Activated naive CD4-positive, alpha-beta T cell treated with anti-CD3 and anti-CD28 coated beads for 36 hours (primary cell): ENCODE measurements at regions of chr16 and their contacts with region 1.

Region 1: GRCh38 chr16:11255737-11256660 is at the start of gene SOCS1:
- DNase-seq: peak; percentile 85
- H3K4me3 Mint-ChIP-seq: peak within 1 kb of the TSS; percentile 95
- H3K27ac Mint-ChIP-seq: peak within 1 kb of the TSS; percentile 99
- H3K4me1 Mint-ChIP-seq: peaks cover 36% of the 10 kb centered on the region
- H3K27me3 Mint-ChIP-seq: no peaks in the 10 kb centered on the region
- total RNA-seq, gene SOCS1: 45.1 to 45.6 TPM

Region 2: GRCh38 chr16:10957771-10958486 is 298.1 kb before region 1 on chr16:
- CTCF ChIA-PET with region 1: interaction called, 57 read pairs
- intact Hi-C with region 1: loop called (anchors 1 kb)
- DNase-seq: peak; percentile 57
- H3K4me3 Mint-ChIP-seq: no peak overlapping the region
- H3K27ac Mint-ChIP-seq: peak overlapping the region; percentile 82
- H3K4me1 Mint-ChIP-seq: peaks cover 37% of the 10 kb centered on the region
- H3K27me3 Mint-ChIP-seq: no peaks in the 10 kb centered on the region

Region 3: DNA sequence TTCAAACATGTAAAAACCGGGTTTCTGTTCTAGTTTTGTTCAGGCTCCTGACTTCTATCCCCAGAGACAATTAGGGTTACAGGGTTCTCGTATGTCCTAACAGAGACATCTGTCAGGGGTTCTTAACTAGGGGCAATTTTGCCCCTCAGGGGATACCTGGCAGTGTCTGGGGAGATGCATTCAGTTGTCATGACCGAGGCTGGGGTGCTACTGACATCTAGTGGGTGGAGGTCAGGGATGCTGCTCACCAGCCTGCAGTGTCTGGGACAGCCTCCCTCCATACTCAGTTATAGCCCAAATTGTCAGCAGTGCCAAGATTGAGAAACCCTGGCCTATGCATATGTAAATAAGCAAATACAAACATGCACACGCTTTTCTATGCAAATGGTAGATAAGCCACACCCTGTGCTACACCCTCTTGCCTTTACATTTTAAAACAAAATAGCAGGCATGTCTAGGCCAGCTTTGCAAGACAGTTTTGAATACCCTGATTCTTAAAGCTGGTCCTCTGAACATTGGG is 274.2 kb before region 1 on chr16:
- CTCF ChIA-PET with region 1: interaction called, 25 read pairs
- intact Hi-C with region 1: no loop called
- DNase-seq: peak; percentile 76
- H3K4me3 Mint-ChIP-seq: no peak overlapping the region
- H3K27ac Mint-ChIP-seq: no peak overlapping the region
- H3K4me1 Mint-ChIP-seq: peaks cover 36% of the 10 kb centered on the region
- H3K27me3 Mint-ChIP-seq: no peaks in the 10 kb centered on the region

Region 4: DNA sequence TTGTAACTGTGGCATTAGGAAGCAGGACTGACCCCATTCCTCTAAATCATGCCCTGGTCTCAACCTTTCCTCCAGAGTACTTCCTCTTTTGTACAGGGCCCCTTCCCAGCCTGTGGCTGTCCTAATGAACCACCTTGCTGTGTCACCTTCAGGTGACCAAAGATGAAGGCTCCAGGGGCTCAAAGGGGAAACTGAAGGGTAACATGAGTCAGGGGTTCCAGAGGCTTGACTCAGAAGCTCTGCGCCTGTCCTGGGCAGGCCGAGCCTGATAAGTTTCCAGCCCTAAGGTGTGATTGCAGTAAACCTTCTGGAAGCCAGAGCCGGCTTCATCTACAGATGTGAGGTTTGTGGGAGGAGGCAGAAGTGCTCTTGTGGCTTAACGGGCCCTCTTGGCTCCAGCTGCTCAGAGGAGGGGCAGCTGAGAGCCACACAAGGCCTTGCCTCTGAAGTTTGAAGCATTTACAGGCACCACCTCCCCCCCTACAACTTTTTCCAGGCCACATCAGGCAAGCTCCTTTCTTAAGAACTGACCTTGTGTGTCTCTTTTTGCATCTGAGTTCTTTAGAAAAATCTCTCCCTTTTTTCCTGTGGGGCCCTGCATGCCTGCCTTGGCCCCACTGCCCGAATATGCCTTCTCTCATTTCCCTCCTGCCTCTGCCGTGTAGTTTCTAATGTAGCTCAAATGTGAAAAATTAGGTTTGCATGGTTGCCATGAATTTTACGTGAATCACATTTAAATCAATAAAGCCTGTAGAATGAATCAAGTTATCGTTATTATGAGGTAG is 161.7 kb before region 1 on chr16:
- CTCF ChIA-PET with region 1: interaction called, 5 read pairs
- intact Hi-C with region 1: loop called (anchors 1 kb)
- DNase-seq: peak; percentile 88
- H3K4me3 Mint-ChIP-seq: peak overlapping the region; percentile 11
- H3K27ac Mint-ChIP-seq: peak overlapping the region; percentile 95
- H3K4me1 Mint-ChIP-seq: peaks cover 68% of the 10 kb centered on the region
- H3K27me3 Mint-ChIP-seq: no peaks in the 10 kb centered on the region

Region 5: DNA sequence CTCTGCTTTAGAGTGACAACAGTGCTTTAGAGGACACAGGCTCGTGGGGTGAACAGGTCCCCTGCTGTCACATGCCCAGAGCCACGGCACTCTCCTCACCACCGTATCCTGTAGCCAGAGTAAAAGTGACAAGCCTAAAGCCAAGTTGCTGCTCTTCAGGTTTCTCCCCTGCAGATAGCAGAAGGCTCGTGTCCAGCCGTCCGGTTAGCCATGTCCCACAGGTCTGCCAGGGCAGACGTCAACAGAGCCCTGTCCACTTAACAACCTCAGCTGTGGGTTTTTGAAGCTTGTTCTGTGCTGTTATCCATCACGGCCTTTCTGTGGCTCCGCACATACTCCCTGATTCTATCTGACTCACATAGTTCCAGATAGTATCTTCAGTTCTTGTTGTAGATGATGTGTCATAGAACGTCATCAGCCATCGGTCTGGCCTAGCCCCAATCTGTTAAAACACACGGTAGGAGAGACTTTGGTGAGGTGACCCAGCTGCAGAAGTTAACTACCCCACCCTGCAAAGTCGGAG is 100.7 kb before region 1 on chr16:
- CTCF ChIA-PET with region 1: no interaction called
- intact Hi-C with region 1: no loop called
- DNase-seq: no peak
- H3K4me3 Mint-ChIP-seq: no peak overlapping the region
- H3K27ac Mint-ChIP-seq: no peak overlapping the region
- H3K4me1 Mint-ChIP-seq: peaks cover 5% of the 10 kb centered on the region
- H3K27me3 Mint-ChIP-seq: no peaks in the 10 kb centered on the region

Region 6: DNA sequence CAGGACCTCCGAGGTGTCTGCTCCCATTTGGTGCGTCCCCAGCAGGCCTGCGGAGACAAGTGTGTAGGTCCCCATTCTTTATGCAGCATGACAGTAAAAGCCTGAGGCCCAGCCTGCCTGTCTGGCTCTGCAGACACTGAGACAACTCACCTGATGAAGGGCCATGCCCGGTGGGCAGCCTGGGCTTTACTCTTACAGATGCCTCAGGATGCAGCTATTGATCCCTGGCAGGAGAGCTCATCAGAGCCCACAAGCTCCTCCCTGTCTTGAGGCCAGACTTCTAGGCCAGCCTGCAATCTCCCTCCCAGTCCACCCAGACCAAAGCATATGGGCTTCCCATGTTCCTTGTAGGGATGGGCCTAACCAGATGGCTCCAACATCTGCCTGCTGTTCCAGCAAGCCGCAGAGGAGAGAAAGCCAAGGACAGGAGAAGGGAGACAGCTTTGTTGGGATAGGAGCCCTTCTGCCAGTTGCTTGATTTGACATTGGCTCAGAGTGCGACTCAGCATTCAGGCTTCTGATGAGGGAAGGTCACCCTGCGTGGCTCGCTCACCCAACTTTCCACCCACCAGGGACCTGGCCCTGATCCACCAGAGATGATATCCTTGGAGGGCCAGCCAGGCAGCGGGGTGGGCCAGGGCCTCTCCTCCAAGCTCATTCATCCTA is 87.5 kb before region 1 on chr16:
- CTCF ChIA-PET with region 1: no interaction called
- intact Hi-C with region 1: no loop called
- DNase-seq: no peak
- H3K4me3 Mint-ChIP-seq: no peak overlapping the region
- H3K27ac Mint-ChIP-seq: no peak overlapping the region
- H3K4me1 Mint-ChIP-seq: no peaks in the 10 kb centered on the region
- H3K27me3 Mint-ChIP-seq: no peaks in the 10 kb centered on the region

Region 7: DNA sequence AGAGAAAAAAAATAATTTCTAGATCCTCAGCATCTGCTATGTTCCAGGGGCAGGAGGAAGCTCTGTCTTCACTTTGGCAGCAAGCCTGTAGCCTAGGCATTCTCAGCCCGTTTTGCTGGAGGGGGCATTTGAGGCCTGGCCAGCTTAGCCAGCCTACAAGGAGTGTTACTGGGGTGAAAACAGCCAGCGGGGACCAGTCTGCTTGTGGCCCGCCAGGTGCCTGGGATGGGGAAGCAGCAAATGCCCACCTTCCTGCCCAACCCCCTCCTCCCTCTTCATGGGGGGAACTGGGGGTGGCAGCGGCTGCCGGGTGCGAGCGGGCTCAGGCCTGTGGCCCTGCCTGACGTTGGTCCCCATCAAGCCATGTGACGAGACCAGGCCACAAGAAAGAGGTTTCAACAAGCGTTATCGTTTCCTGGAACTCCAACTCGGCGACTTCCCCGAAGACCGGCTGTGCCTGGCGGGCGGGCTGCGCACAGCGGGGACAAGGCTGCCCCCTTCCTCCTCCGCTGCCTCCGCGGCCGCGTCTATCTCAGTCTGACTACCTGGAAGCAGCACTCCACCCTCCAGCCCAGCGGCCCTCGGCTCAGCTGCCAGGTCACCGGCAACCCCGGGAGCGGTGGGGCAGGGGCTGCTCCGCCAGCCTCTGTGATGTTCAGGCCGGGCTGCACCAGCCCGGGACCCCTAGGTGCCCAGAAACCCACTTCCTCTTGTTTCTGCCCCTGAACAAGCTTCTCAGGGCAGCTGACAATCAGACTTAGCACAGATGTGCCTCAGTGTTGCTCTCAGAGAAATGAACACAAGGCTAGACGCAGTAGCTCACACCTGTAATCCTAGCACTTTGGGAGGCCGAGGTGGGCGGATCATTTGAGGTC is 22.9 kb before region 1 on chr16:
- CTCF ChIA-PET with region 1: interaction called, 7 read pairs
- intact Hi-C with region 1: loop called (anchors 1 kb)
- DNase-seq: peak; percentile 97
- H3K4me3 Mint-ChIP-seq: peak overlapping the region; percentile 57
- H3K27ac Mint-ChIP-seq: peak overlapping the region; percentile 99
- H3K4me1 Mint-ChIP-seq: peaks cover 55% of the 10 kb centered on the region
- H3K27me3 Mint-ChIP-seq: no peaks in the 10 kb centered on the region

Region 8: GRCh38 chr16:11312718-11313492 is 56.9 kb after region 1 on chr16:
- CTCF ChIA-PET with region 1: interaction called, 5 read pairs
- intact Hi-C with region 1: loop called (anchors 5 kb)
- DNase-seq: peak; percentile 29
- H3K4me3 Mint-ChIP-seq: no peak overlapping the region
- H3K27ac Mint-ChIP-seq: no peak overlapping the region
- H3K4me1 Mint-ChIP-seq: peaks cover 34% of the 10 kb centered on the region
- H3K27me3 Mint-ChIP-seq: no peaks in the 10 kb centered on the region

Region 9: GRCh38 chr16:11797166-11797956 is 541.4 kb after region 1 on chr16 and contains the start of gene ZC3H7A:
- CTCF ChIA-PET with region 1: no interaction called
- intact Hi-C with region 1: loop called (anchors 10 kb)
- DNase-seq: peak; percentile 95
- H3K4me3 Mint-ChIP-seq: peak within 1 kb of the TSS; percentile 92
- H3K27ac Mint-ChIP-seq: peak within 1 kb of the TSS; percentile 93
- H3K4me1 Mint-ChIP-seq: peaks cover 72% of the 10 kb centered on the region
- H3K27me3 Mint-ChIP-seq: no peaks in the 10 kb centered on the region
- total RNA-seq, gene ZC3H7A: 123 to 127 TPM